OCI-LY7 (cell line): ENCODE measurements at regions of chr5 and their contacts with region 1.

Region 1: DNA sequence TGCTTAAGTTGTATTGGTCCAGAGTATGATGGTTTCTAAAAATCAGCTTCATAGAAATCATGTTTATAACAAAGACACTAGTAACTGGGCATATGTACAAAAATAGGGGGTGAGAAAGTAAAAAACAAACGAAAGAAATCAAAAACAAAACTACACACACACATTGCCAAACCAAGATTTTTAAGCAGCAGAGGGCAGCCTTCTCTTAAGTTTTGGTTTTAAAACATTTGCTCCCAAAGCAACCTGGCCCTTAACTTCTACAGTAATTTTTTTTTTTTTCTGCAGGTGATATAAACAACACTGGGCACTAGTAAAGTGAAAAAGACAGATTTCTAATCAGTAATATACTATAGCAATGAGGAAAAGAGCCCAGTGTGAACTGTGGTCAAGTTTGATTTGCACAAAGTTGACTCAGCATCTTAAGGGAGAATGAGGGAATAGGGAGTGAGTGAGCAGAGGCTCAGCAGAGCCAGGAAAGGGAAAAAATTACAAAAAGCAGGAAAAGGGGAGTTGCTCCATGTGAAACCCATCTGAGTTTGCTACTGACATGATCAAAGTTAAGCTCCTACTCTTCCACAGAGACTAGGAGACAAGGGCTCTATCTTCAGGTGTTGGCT is 13.4 kb upstream of the GAPT start:
- DNase-seq: peak; percentile 25
- H3K4me3 ChIP-seq: no peak overlapping the region
- H3K27ac ChIP-seq: no peak overlapping the region
- H3K4me1 ChIP-seq: no peaks in the 10 kb centered on the region
- CTCF ChIP-seq: peak; percentile 79

Region 2: DNA sequence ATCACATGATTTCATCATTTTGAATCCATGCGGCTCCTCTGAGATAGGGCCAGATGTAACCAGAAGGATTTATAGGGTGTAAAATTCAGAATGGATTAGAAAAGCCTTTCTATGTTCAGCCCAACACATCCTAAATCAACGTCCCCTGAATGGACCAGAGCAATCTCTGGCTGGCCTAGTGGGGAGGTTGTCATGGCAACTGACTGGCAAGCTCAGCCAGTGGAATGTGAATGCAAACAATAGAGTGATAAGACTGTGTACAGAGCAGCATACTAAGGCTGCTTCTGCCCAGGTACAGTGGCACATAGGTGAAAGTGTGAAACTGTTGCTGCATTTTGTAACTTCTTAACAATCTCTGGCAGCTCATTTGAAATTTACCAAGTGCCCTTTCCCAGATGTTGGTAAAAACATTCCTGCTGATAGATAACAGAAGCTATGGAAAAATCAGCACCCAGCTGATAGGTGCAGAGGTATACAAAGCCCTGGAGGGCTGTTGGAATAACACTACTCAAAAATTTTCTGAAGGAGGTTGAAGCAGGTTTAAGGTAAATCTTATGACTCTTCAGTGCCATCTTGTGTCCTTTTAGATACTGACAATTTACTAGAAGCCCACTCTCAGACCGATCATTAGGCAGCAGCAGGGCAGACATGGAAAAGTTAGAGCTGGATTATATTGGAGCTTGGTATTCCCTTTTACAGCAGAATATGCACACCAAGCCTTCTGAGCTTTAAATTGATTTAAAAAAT is 372.2 kb after region 1 on chr5:
- CTCF ChIA-PET with region 1: no interaction called
- POLR2A ChIA-PET with region 1: no interaction called
- intact Hi-C with region 1: loop called (anchors 1 kb)
- DNase-seq: peak; percentile 33
- H3K4me3 ChIP-seq: no peak overlapping the region
- H3K27ac ChIP-seq: no peak overlapping the region
- H3K4me1 ChIP-seq: no peaks in the 10 kb centered on the region
- CTCF ChIP-seq: peak; percentile 73